CD14-positive monocyte (primary cell): ENCODE measurements at regions of chr11 and their contacts with region 1.

Region 1: GRCh38 chr11:115598257-115598901 is 94.2 kb upstream of the CADM1 start:
- DNase-seq: no peak
- H3K4me3 ChIP-seq: no peak overlapping the region
- H3K4me3 Mint-ChIP-seq: no peak overlapping the region
- H3K27ac ChIP-seq: no peak overlapping the region
- H3K27ac Mint-ChIP-seq: no peak overlapping the region
- H3K4me1 ChIP-seq: no peaks in the 10 kb centered on the region
- H3K4me1 Mint-ChIP-seq: no peaks in the 10 kb centered on the region
- H3K27me3 ChIP-seq: no peaks in the 10 kb centered on the region
- H3K27me3 Mint-ChIP-seq: peaks cover 5 to 8% (median 5%) of the 10 kb centered on the region in 3 donors
- CTCF ChIP-seq: no peak

Region 2: DNA sequence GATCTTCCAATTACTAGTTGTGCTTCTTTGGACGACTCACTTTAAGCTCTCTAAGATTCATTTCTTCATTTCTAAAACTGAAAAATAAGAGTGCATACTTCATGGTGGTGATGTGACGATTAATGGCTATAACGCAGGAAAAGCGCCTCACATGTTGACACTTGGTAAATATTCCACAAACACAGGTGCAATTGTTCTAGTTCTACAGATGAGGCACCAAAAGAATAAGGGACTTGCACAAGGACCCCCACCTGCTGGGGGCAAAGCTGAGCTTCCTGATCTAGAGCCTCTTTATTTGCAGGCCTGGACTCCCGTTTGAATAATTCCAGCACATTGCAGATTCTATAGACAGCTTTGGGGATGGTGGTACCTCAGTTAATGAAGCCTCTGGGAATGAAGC is 79.4 kb before region 1 on chr11:
- intact Hi-C with region 1: loop called in 1 of 2 experiments (anchors 2 kb)
- DNase-seq: no peak
- H3K4me3 ChIP-seq: no peak overlapping the region
- H3K4me3 Mint-ChIP-seq: no peak overlapping the region
- H3K27ac ChIP-seq: no peak overlapping the region
- H3K27ac Mint-ChIP-seq: no peak overlapping the region
- H3K4me1 ChIP-seq: no peaks in the 10 kb centered on the region
- H3K4me1 Mint-ChIP-seq: no peaks in the 10 kb centered on the region
- H3K27me3 ChIP-seq: peaks cover 2% of the 10 kb centered on the region in 2 donors
- H3K27me3 Mint-ChIP-seq: peaks cover 7 to 25% (median 13%) of the 10 kb centered on the region in 3 donors
- CTCF ChIP-seq: no peak

Region 3: GRCh38 chr11:115905341-115906000 is 307.1 kb after region 1 on chr11:
- intact Hi-C with region 1: no loop called
- DNase-seq: no peak
- H3K4me3 ChIP-seq: no peak overlapping the region
- H3K4me3 Mint-ChIP-seq: no peak overlapping the region
- H3K27ac ChIP-seq: no peak overlapping the region
- H3K27ac Mint-ChIP-seq: no peak overlapping the region
- H3K4me1 ChIP-seq: peaks cover 0 to 5% of the 10 kb centered on the region in 2 donors
- H3K4me1 Mint-ChIP-seq: no peaks in the 10 kb centered on the region
- H3K27me3 ChIP-seq: no peaks in the 10 kb centered on the region
- H3K27me3 Mint-ChIP-seq: peaks cover 1 to 4% (median 3%) of the 10 kb centered on the region in 3 donors
- CTCF ChIP-seq: no peak